ENCODE measurements at regions of chrX and their contacts with region 1.

Region 1: DNA sequence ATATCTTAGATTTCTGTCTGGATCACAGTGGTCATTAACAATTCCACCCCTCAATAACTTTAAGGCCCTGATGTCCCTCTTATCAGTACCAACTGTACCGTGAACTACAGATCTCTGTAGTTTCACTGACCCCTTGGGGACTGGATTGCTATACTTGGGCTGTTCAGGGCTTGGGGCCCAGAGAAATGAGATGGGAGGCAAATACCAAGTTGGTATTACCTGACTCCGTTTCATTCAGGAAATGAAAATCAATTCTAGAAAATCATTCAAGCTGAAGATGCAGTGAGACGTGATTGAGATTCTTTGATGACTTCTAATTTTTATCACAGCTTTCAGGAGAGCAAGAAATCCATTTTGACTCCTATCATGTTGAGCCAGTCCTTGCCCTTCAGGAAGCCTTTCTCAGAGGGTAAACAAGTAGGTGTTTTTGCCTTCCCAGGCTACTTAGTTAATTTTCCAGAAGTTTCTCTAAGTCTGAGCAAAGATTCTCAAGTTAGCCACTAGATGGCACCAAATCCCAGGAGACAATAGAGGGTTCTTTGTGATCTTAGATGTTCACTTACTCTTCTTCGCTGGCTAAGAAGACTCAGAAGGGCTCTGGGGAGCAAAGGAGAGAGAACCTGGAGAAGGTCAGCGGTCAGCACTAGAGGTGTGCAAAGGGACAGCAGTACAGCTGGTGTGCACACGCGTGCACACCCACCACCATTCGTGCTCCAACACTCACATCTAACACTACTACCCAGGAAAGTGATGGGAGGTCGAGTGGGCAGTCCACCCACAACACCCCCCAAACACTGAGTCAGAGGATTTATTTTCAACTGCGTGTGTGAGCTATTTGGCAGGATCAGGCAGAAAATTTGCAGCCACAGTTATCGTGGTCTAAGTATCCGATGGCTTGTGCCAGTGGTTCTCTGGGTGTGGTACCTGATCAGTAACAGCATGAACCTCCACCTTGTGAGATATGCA is 7.4 kb downstream of the HNRNPH2 start:
- DNase-seq: peak; percentile 64
- H3K4me3 ChIP-seq: no peak overlapping the region
- H3K27ac ChIP-seq: peak overlapping the region; percentile 47
- H3K4me1 ChIP-seq: peaks cover 12% of the 10 kb centered on the region
- CTCF ChIP-seq: peak; percentile 84

Region 2: DNA sequence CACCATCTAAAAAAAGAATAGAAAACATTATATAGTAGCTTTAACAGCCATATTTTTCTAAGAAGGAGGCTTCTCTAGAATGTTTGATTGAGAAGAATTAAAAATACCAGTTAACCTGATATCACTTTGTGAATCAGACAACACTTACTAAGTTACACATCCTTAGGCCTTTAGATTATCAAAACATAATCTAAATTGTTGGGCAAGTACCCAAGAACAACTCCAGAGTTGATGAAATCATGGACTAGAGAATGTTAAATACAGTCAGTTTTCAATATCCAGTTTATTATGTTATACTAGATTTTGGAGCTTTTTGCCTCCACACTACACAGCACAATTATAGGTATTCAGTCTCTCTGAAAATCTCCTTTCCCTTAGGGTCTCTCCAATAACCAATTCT is 406.4 kb before region 1 on chrX:
- CTCF ChIA-PET with region 1: no interaction called
- POLR2A ChIA-PET with region 1: no interaction called
- intact Hi-C with region 1: no loop called
- DNase-seq: no peak
- H3K4me3 ChIP-seq: no peak overlapping the region
- H3K27ac ChIP-seq: no peak overlapping the region
- H3K4me1 ChIP-seq: no peaks in the 10 kb centered on the region
- CTCF ChIP-seq: no peak

Region 3: DNA sequence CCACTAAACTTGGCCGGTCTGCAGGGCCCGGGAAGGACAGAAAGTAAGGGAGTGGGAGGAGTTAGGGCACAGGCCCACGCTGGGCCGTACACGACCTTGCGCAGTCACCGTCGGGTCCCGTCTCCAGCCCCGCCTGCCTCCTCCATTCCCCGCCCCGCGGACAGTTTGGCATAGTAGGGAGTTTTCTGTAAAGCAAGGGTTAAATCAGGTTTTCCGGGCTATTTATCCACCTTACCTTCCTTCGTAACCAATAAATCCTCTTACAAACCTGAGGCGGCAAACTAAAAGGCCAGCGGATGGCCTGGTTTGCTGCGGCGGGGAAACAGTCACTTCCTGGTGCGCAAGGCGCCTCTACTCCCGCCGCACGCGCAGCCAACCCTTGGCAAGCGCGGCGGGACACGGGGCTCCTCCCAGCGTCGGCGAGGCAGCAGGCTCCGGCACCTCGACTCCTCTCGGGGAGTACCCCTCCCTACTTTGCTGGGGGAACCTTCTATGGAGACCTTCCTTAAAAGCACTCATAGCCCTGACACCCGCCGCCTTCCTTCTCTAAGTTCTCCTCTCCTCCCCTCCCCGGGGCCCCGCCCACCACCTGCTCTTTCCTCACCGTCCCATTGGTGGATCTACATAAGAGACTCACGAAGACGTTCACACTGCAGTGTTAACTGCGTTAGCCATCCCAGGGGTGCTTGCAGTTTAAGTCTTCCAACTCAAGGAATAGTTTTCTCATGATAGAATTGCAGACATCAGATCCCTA is 363.7 kb before region 1 on chrX and contains the start of gene TRMT2B:
- CTCF ChIA-PET with region 1: no interaction called
- POLR2A ChIA-PET with region 1: no interaction called
- intact Hi-C with region 1: no loop called
- DNase-seq: peak; percentile 80
- H3K4me3 ChIP-seq: peak within 1 kb of the TSS; percentile 89
- H3K27ac ChIP-seq: peak within 1 kb of the TSS; percentile 68
- H3K4me1 ChIP-seq: peaks cover 5% of the 10 kb centered on the region
- CTCF ChIP-seq: no peak
- total RNA-seq, gene TRMT2B: 20.7 and 25.3 TPM in 2 replicates

Region 4: DNA sequence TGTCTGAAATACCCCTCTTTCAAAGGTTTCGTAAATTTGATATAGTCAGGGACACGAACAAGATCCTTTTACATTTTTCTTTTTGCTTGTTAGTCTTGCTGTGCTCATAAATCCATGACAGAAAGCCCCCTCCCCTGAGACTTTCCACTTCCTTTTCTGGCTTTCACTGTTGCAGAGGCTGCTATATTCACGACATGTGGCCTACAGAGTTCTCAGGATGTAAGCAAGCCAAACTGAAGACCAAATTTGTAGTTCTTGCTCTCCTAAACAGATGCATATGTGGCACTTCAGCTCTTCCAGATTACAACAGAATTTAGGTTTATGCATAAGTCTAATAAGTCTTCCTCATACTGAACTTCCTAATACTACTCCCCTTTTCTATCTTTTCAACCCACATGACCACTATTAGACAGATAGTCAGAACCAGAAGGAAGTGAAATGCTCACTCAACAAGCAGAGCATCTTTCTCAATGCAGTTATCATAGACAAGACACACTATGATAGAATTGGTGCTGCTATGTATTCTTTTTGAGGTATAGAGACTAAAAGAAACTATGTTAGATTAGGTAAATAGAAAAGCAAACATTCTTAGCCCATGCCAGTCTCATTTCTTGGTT is 44.5 kb before region 1 on chrX:
- CTCF ChIA-PET with region 1: no interaction called
- POLR2A ChIA-PET with region 1: no interaction called
- intact Hi-C with region 1: no loop called
- DNase-seq: peak; percentile 79
- H3K4me3 ChIP-seq: peak overlapping the region; percentile 31
- H3K27ac ChIP-seq: peak overlapping the region; percentile 96
- H3K4me1 ChIP-seq: peaks cover 69% of the 10 kb centered on the region
- CTCF ChIP-seq: no peak

Region 5: DNA sequence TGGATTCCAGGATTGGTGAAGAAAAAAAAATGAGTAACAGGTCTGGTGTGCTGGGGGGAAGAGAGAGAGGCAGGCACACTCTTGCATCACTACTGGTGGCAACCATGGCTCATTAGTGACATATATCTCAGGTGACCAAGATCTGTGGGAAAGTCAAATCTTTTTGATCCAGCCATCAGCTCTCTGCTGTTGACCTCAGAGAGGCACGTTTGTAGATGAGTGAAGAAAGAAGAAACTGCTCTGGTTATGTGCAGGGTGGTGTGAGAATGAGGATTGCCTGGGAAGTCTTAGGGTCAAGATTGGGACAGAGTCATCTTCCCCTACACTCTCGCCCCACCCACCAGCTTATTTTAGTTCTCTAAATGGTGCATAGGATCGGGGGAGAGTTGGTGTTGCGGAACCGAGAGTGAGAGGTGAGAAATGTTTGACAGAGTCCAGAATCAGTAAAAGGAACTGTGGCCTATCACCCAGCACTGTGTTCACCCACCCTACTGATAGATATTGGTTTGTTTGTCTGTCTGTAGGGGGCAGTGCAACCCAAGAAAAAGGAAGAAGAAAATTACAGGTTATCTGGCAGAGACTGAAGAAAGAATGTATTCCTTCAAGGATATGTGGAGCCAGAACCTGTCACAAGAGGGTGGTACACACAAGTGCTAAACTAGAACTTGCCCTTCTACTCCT is 180.4 kb after region 1 on chrX:
- CTCF ChIA-PET with region 1: no interaction called
- POLR2A ChIA-PET with region 1: interaction called, 3 read pairs
- intact Hi-C with region 1: loop called (anchors 5 kb)
- DNase-seq: peak; percentile 53
- H3K4me3 ChIP-seq: no peak overlapping the region
- H3K27ac ChIP-seq: no peak overlapping the region
- H3K4me1 ChIP-seq: no peaks in the 10 kb centered on the region
- CTCF ChIP-seq: peak; percentile 82

Region 6: DNA sequence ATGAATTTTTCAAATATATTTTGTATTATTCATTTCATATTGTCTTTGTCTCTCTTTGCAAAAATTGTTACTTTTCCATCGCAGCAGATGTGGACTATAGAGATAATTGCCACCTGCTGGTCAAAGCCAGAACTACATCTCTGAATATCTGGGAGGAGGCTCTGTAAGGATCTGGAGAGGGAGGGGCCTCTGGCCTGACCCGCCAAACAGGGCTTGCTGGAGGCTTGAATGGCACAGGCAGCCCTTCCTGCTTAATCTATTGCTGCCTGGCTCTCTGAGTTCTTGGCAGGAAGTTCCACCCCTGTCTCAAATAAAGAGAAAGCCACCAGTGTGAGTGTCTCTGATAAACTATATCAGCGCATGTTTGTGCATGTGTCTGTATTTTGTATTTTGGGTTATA is 383.9 kb after region 1 on chrX:
- CTCF ChIA-PET with region 1: no interaction called
- POLR2A ChIA-PET with region 1: no interaction called
- intact Hi-C with region 1: loop called (anchors 2 kb)
- DNase-seq: peak; percentile 79
- H3K4me3 ChIP-seq: no peak overlapping the region
- H3K27ac ChIP-seq: no peak overlapping the region
- H3K4me1 ChIP-seq: no peaks in the 10 kb centered on the region
- CTCF ChIP-seq: peak; percentile 75